Body of pancreas (tissue), 4 donors: ENCODE measurements at regions of chr17 and their contacts with region 1.

Region 1: DNA sequence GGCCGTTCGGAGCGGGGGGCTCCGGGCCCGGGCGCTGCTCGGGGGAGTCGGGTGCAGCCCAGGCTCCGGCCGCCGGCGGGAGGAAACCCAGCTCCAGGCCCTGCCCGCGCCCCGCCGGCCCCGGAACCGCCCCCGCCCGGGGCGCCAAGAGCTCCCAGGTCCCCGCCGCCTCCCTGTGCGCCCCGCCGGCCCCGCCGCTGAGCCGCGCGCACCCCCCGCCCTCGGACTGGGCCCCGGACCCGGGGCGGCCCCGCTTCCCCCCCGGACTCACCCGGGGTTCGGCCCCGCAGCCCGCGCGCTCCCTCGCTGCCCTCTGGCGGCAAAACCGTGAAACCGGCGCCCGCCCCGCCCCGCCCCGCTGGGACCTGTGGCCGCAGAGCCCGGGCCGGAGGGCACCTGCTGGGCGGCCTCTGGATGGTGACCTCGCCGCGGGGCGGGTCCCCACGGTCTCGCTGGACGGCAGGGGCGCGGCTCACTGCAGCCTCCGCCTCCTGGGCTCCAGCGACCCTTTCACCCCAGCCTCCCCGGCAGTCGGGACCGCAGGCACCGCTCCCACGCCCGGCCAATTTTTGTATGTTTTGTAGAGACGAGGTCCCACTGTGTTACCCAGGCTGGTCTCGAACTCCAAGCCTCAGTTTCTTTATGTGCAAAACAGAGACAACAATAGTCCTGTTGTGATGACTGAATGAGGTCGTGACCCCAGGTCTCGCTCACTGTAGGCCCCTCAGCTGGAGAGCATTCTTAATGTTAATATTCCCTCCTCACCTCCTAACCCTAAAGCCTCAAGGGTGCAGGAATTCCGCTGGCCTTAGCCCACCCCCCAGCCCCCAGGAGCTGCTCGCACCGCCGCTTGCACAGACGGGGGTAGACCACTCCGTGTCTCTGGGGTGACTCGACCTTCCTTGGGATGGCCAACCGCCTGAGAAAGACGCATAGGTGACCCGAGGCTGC is 33.6 kb upstream of the RPH3AL start:
- DNase-seq: peak; percentile 72 to 82 (median 79)
- ATAC-seq: peak; percentile 91
- H3K4me3 ChIP-seq: peak overlapping the region in 1 of 2 donors; percentile 16
- H3K27ac ChIP-seq: peak overlapping the region; percentile 30 to 69 (median 66)
- H3K4me1 ChIP-seq: peaks cover 12% of the 10 kb centered on the region
- H3K27me3 ChIP-seq: no peaks in the 10 kb centered on the region
- CTCF ChIP-seq: peak; percentile 26 to 90 (median 85)
- POLR2A ChIP-seq: no peak

Region 2: DNA sequence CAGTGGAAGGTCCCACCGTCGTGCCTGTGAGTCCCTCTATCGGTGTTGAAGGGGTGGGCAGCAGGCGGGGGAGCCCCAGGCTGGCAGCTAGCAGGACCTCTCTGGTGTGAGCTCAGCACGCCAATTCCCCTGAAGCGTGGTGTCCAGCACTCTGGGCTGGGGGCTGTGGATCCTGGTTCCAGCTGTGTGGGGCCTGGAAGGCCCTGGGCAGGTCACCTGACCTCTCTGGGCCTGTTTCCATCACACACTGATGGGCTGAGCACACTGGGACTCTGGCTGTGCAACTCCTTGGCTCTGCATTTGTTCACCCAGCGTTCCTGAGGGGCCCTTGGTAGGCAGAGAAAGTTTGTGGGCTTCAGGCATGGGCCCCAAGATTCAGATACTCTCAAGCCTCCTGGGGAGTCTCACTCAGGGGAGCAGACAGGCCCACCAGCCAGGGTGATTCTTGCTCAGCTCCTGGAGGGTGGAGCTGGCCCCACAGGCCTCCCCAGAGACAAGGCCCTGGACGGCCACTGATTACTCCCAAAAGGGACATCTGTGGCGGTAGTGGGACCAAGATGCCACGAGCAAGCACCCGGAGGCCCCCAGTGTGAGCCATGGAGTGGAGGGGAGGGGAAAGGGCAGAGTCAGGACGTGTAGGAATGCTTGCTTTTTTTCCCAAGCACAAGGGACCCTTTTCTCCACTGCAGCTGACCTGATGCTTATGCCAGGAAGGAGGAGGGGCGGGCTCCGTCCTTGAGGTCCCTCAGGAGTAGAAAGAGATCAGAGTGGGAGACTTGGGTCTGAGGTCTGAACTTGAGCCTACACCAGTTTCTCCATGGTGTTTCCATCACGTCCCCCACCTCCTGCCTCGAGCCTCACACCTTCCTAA is 240.3 kb before region 1 on chr17:
- intact Hi-C with region 1: loop called (anchors 5 kb)
- DNase-seq: peak in 3 of 4 donors; percentile 1 to 24 (median 11)
- ATAC-seq: no peak
- H3K4me3 ChIP-seq: no peak overlapping the region
- H3K27ac ChIP-seq: no peak overlapping the region
- H3K4me1 ChIP-seq: peaks cover 9% of the 10 kb centered on the region
- H3K27me3 ChIP-seq: no peaks in the 10 kb centered on the region
- CTCF ChIP-seq: no peak
- POLR2A ChIP-seq: no peak

Region 3: DNA sequence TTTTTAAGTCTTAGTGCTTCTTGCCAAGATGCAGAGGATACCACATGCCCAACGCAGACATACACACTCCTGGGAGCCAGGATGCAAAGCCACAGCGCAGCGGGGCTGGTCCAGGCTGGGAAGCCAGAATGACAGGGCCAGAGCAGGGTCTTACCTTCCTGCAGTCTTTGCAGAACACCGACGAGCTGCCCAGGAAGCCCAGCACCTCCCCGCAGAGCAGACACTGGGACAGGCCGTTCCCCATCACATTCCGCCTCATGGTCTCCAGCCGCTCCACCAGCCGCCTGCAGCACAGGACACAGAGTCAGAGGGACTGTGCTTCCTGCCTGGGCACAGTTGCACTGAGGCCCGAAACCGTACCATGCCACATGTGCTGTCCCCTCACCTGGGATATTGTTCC is 66.9 kb before region 1 on chr17:
- intact Hi-C with region 1: loop called (anchors 5 kb)
- DNase-seq: peak in 1 of 4 donors; percentile 13
- ATAC-seq: no peak
- H3K4me3 ChIP-seq: no peak overlapping the region
- H3K27ac ChIP-seq: no peak overlapping the region
- H3K4me1 ChIP-seq: no peaks in the 10 kb centered on the region
- H3K27me3 ChIP-seq: no peaks in the 10 kb centered on the region
- CTCF ChIP-seq: no peak
- POLR2A ChIP-seq: no peak

Region 4: GRCh38 chr17:700504-701094 is 314.4 kb after region 1 on chr17:
- intact Hi-C with region 1: no loop called
- DNase-seq: no peak
- ATAC-seq: no peak
- H3K4me3 ChIP-seq: no peak overlapping the region
- H3K27ac ChIP-seq: no peak overlapping the region
- H3K4me1 ChIP-seq: no peaks in the 10 kb centered on the region
- H3K27me3 ChIP-seq: no peaks in the 10 kb centered on the region
- CTCF ChIP-seq: peak; percentile 42 to 74 (median 68)
- POLR2A ChIP-seq: no peak